ENCODE measurements at regions of chr10 and their contacts with region 1.

Region 1: GRCh38 chr10:52308251-52309031 is 5.6 kb upstream of the DKK1 start:
- DNase-seq: peak in 2 of 9 donors; percentile 6 to 21
- ATAC-seq: peak; percentile 29
- H3K4me3 ChIP-seq: no peak overlapping the region
- H3K4me3 Mint-ChIP-seq: peak overlapping the region in 7 of 10 donors; percentile 9 to 58 (median 40)
- H3K27ac ChIP-seq: no peak overlapping the region
- H3K27ac Mint-ChIP-seq: no peak overlapping the region
- H3K4me1 ChIP-seq: no peaks in the 10 kb centered on the region
- H3K4me1 Mint-ChIP-seq: peaks cover 0 to 13% (median 6%) of the 10 kb centered on the region in 7 donors
- H3K27me3 ChIP-seq: peaks cover 0 to 2% of the 10 kb centered on the region in 2 donors
- H3K27me3 Mint-ChIP-seq: peaks cover 45 to 68% (median 53%) of the 10 kb centered on the region in 5 donors

Region 2: GRCh38 chr10:51397695-51398094 is 910.7 kb before region 1 on chr10:
- CTCF ChIA-PET with region 1: no interaction called
- POLR2A ChIA-PET with region 1: no interaction called
- intact Hi-C with region 1: no loop called
- DNase-seq: no peak
- ATAC-seq: no peak
- H3K4me3 ChIP-seq: no peak overlapping the region
- H3K4me3 Mint-ChIP-seq: no peak overlapping the region
- H3K27ac ChIP-seq: no peak overlapping the region
- H3K27ac Mint-ChIP-seq: no peak overlapping the region
- H3K4me1 ChIP-seq: no peaks in the 10 kb centered on the region
- H3K4me1 Mint-ChIP-seq: no peaks in the 10 kb centered on the region
- H3K27me3 ChIP-seq: no peaks in the 10 kb centered on the region
- H3K27me3 Mint-ChIP-seq: peaks cover 0 to 6% (median 0%) of the 10 kb centered on the region in 5 donors

Region 3: GRCh38 chr10:52488606-52489485 is 180.4 kb after region 1 on chr10:
- CTCF ChIA-PET with region 1: no interaction called
- POLR2A ChIA-PET with region 1: no interaction called
- intact Hi-C with region 1: loop called in 1 of 2 experiments (anchors 2 kb)
- DNase-seq: no peak
- ATAC-seq: no peak
- H3K4me3 ChIP-seq: no peak overlapping the region
- H3K4me3 Mint-ChIP-seq: no peak overlapping the region
- H3K27ac ChIP-seq: no peak overlapping the region
- H3K27ac Mint-ChIP-seq: no peak overlapping the region
- H3K4me1 ChIP-seq: no peaks in the 10 kb centered on the region
- H3K4me1 Mint-ChIP-seq: no peaks in the 10 kb centered on the region
- H3K27me3 ChIP-seq: no peaks in the 10 kb centered on the region
- H3K27me3 Mint-ChIP-seq: no peaks in the 10 kb centered on the region

Measured in naive thymus-derived CD4-positive, alpha-beta T cell (primary cell).